Aorta (tissue), 5 donors: ENCODE measurements at regions of chr10 and their contacts with region 1.

Region 1: DNA sequence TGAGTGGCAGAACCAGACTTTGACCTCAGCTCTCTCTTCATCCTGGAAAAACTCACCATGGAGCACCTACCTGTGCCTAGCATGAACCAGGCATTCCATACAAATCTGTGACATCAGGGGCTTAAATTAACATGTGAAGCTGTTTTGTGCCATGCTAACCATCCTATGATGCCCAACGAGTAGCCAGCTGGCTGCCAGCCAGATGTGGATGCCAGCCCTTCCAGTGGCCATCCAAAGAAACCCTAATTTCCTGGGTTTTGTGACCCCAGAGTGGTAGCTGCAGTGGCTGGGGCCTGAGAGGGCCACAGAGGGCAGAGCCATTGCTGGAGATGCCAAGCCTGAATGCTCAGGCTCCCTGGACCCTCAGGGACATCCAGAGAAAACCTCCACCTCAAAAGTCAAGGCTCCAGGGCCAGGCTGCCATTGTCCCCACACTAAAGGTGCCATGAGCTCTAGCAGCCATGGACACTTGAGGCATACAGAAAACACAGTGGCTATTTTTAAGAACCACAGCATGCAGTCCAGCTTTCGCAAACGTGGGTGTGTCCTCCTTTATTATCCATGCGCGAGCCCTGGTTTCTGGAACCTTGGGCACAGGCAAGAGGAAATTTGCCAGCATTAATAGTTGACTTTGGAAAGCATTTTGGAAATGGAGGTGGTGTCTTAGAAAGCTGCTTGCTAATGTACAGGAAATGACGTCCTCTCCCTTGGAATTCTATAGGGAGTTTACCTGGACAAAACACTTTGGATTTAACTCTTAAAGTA is 6.0 kb downstream of the CPXM2 start:
- DNase-seq: peak; percentile 74 to 92
- ATAC-seq: peak; percentile 76
- H3K4me3 ChIP-seq: no peak overlapping the region
- H3K27ac ChIP-seq: peak overlapping the region; percentile 77 to 97
- H3K4me1 ChIP-seq: peaks cover 3 to 13% of the 10 kb centered on the region in 2 donors
- H3K27me3 ChIP-seq: no peaks in the 10 kb centered on the region

Region 2: GRCh38 chr10:123800289-123800688 is 85.3 kb before region 1 on chr10:
- intact Hi-C with region 1: loop called (anchors 5 kb)
- DNase-seq: no peak
- ATAC-seq: peak; percentile 68
- H3K4me3 ChIP-seq: peak overlapping the region in 1 of 2 donors; percentile 28
- H3K27ac ChIP-seq: peak overlapping the region; percentile 85 to 90
- H3K4me1 ChIP-seq: peaks cover 0 to 4% of the 10 kb centered on the region in 2 donors
- H3K27me3 ChIP-seq: no peaks in the 10 kb centered on the region

Region 3: GRCh38 chr10:123858077-123858681 is 27.4 kb before region 1 on chr10:
- intact Hi-C with region 1: loop called (anchors 5 kb)
- DNase-seq: peak in 1 of 2 donors; percentile 60
- ATAC-seq: peak; percentile 63
- H3K4me3 ChIP-seq: no peak overlapping the region
- H3K27ac ChIP-seq: no peak overlapping the region
- H3K4me1 ChIP-seq: peaks cover 0 to 3% of the 10 kb centered on the region in 2 donors
- H3K27me3 ChIP-seq: no peaks in the 10 kb centered on the region

Region 4: DNA sequence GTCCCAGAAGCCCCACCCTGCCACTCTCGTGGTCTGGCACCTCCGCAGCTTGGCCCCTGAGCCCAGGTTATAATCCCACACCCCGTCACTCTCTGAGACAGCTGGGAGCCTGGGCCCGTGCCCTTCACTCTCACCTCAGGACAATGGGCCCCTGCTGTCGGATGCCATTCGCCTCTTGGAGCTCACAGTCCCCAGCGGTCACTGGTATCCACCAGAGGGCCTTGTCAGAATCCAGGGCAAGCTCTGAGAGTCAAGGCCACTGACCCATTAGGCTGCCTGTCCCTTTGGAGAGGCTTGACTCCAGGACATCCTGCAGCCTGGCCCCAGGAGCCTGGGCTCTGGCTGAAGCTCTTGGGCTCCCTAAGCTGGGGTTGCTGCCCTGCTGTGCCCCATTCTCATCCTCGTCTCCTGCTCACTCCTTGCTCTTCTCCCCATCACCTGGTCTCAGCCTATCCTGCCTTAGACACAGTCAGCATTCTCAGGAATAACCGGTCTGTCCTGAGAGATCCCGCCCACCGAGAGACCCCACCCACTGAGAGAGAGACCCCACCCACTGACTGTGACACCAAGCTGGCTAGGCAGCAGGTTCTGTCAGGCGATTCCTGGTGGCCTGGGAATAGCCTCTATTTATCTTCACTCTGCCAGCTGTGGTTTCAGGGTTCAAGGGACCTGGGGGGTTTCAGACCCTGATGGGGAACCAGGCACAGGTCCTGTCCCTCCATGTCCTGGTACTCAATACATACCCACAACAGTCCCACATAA is 21.7 kb before region 1 on chr10:
- intact Hi-C with region 1: loop called in 1 of 2 experiments (anchors 2 kb)
- DNase-seq: no peak
- ATAC-seq: no peak
- H3K4me3 ChIP-seq: no peak overlapping the region
- H3K27ac ChIP-seq: peak overlapping the region; percentile 81 to 82
- H3K4me1 ChIP-seq: peaks cover 0 to 3% of the 10 kb centered on the region in 2 donors
- H3K27me3 ChIP-seq: no peaks in the 10 kb centered on the region